ENCODE measurements at regions of chr5 and their contacts with region 1.

Region 1: DNA sequence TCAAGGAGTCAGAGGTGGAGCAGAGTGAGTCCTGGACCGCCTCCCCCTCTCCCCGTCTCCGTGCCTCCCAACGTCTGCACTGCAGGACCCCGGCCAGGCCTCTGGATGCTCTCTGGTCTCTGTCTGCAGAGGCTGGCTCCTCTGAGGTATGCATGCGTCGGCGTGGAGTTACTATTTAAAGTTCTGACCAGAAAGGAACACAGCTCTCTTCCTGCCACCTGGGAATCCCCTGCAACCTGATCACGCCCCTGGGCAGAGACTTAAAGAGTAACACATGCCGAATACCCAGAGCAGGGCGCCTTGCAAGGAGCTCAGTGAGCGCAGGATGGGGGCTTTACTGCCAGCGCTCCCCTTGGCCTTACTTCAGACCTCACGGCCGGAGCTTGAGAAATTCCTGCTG is 16.0 kb downstream of the ANXA6 start:
- DNase-seq: peak; percentile 37 to 80 (median 55)
- ATAC-seq: peak; percentile 80 to 81
- H3K4me3 Mint-ChIP-seq: peak overlapping the region; percentile 80 to 94 (median 92)
- H3K27ac Mint-ChIP-seq: peak overlapping the region; percentile 91 to 99 (median 95)
- H3K4me1 Mint-ChIP-seq: peaks cover 67 to 99% (median 98%) of the 10 kb centered on the region in 4 donors
- H3K27me3 Mint-ChIP-seq: no peaks in the 10 kb centered on the region

Region 2: GRCh38 chr5:151115274-151115905 is 26.1 kb before region 1 on chr5:
- POLR2A ChIA-PET with region 1: no interaction called
- DNase-seq: peak; percentile 48 to 82 (median 64)
- ATAC-seq: peak; percentile 68 to 93
- H3K4me3 Mint-ChIP-seq: no peak overlapping the region
- H3K27ac Mint-ChIP-seq: peak overlapping the region in 7 of 10 donors; percentile 37 to 53 (median 44)
- H3K4me1 Mint-ChIP-seq: peaks cover 7 to 17% (median 12%) of the 10 kb centered on the region in 4 donors
- H3K27me3 Mint-ChIP-seq: no peaks in the 10 kb centered on the region

Region 3: GRCh38 chr5:151157426-151158286 is 16.1 kb after region 1 on chr5 and contains the start of gene ANXA6:
- POLR2A ChIA-PET with region 1: interaction called, 185 read pairs
- DNase-seq: peak; percentile 24 to 76 (median 60)
- ATAC-seq: peak; percentile 75 to 76
- H3K4me3 Mint-ChIP-seq: peak within 1 kb of the TSS; percentile 93 to 99 (median 95)
- H3K27ac Mint-ChIP-seq: peak within 1 kb of the TSS; percentile 94 to 99 (median 96)
- H3K4me1 Mint-ChIP-seq: peaks cover 38 to 69% (median 60%) of the 10 kb centered on the region in 4 donors
- H3K27me3 Mint-ChIP-seq: no peaks in the 10 kb centered on the region
- polyA plus RNA-seq, gene ANXA6: 242 to 318 (median 254) TPM